Sigmoid colon (tissue), 7 donors: ENCODE measurements at regions of chr6 and their contacts with region 1.

Region 1: GRCh38 chr6:73520688-73521350 is at the start of gene EEF1A1:
- DNase-seq: peak; percentile 99
- H3K4me3 ChIP-seq: peak within 1 kb of the TSS; percentile 80 to 85 (median 82)
- H3K27ac ChIP-seq: peak within 1 kb of the TSS; percentile 92 to 100 (median 100)
- H3K4me1 ChIP-seq: peaks cover 0 to 60% (median 55%) of the 10 kb centered on the region in 4 donors
- H3K27me3 ChIP-seq: no peaks in the 10 kb centered on the region
- CTCF ChIP-seq: no peak
- EP300 ChIP-seq: peak; percentile 50 to 96 (median 68)
- POLR2A ChIP-seq: peak; percentile 100
- total RNA-seq, gene EEF1A1: 10,846 to 15,452 (median 12,894) TPM

Region 2: GRCh38 chr6:73461537-73462350 is 59.1 kb before region 1 on chr6 and contains the start of gene MTO1:
- intact Hi-C with region 1: loop called (anchors 5 kb)
- DNase-seq: peak; percentile 95
- H3K4me3 ChIP-seq: peak within 1 kb of the TSS; percentile 76 to 96 (median 94)
- H3K27ac ChIP-seq: peak within 1 kb of the TSS; percentile 94 to 96 (median 94)
- H3K4me1 ChIP-seq: peaks cover 0 to 31% (median 27%) of the 10 kb centered on the region in 4 donors
- H3K27me3 ChIP-seq: no peaks in the 10 kb centered on the region
- CTCF ChIP-seq: no peak
- EP300 ChIP-seq: no peak
- POLR2A ChIP-seq: peak; percentile 48 to 53
- total RNA-seq, gene MTO1: 17.9 to 42.3 (median 29.4) TPM

Region 3: DNA sequence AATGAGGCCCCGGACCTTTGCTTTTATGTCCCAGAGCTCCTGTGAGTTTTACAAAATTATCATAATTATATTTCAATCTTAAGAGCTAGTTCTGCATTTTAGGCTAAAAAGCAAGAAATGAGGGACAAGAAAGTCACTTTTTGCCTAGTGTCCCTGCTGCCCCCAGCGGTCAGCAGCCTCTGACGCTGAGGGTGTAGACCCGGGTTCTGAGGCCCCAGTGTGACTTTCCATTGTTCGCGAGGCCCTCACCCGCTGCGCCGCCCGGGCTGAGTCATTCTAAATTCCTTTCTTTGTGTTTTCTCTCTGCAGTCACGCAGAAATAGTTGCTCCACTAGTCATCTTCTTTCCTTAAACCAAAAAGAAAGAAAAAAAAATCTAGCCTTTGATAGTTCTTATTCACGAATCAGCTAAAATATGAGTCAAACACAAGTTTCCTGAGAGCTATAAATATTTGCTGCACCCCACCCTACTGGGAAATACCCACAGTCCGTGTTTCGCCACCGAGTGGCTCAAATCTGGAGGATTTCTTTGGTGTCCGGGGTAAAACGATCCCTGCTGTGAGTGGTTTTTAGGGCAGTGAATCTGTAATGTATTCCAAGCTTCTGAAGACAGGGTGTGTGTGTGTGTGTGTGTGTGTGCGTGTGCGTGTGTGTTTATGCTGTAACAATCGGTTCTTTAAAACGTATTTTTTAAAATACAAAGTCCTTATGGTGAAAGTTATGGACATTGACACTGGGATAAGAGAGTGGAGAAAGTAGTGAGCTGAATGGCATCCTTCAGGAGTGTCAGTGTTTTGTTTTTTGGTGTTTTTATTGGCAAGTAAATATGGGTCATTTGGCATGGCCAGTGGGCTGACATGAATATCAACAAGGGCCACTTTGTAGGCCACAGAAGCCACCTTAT is 59.7 kb after region 1 on chr6:
- intact Hi-C with region 1: loop called (anchors 1 kb)
- DNase-seq: peak; percentile 93
- H3K4me3 ChIP-seq: peak overlapping the region in 3 of 4 donors; percentile 25 to 39 (median 28)
- H3K27ac ChIP-seq: peak overlapping the region; percentile 90 to 98 (median 93)
- H3K4me1 ChIP-seq: peaks cover 0 to 35% (median 31%) of the 10 kb centered on the region in 4 donors
- H3K27me3 ChIP-seq: no peaks in the 10 kb centered on the region
- CTCF ChIP-seq: peak in 3 of 4 experiments; percentile 9 to 43 (median 30)
- EP300 ChIP-seq: peak in 3 of 4 donors; percentile 14 to 80 (median 15)
- POLR2A ChIP-seq: peak in 1 of 2 donors; percentile 8

Region 4: GRCh38 chr6:73585566-73586415 is 65.0 kb after region 1 on chr6:
- intact Hi-C with region 1: loop called (anchors 1 kb)
- DNase-seq: no peak
- H3K4me3 ChIP-seq: peak overlapping the region; percentile 4 to 33 (median 16)
- H3K27ac ChIP-seq: peak overlapping the region; percentile 87 to 98 (median 92)
- H3K4me1 ChIP-seq: peaks cover 0 to 36% (median 23%) of the 10 kb centered on the region in 4 donors
- H3K27me3 ChIP-seq: no peaks in the 10 kb centered on the region
- CTCF ChIP-seq: no peak
- EP300 ChIP-seq: peak in 1 of 4 donors; percentile 88
- POLR2A ChIP-seq: no peak

Region 5: GRCh38 chr6:73653571-73654424 is 133.0 kb after region 1 on chr6 and contains the start of gene SLC17A5:
- intact Hi-C with region 1: loop called (anchors 2 kb)
- DNase-seq: peak; percentile 97
- H3K4me3 ChIP-seq: peak within 1 kb of the TSS; percentile 84 to 98 (median 92)
- H3K27ac ChIP-seq: peak within 1 kb of the TSS; percentile 94 to 99 (median 96)
- H3K4me1 ChIP-seq: peaks cover 0 to 21% (median 15%) of the 10 kb centered on the region in 4 donors
- H3K27me3 ChIP-seq: no peaks in the 10 kb centered on the region
- CTCF ChIP-seq: peak in 1 of 4 experiments; percentile 9
- EP300 ChIP-seq: no peak
- POLR2A ChIP-seq: peak; percentile 34 to 52
- total RNA-seq, gene SLC17A5: 12.2 to 18.2 (median 14.8) TPM